Activated naive CD4-positive, alpha-beta T cell treated with anti-CD3 and anti-CD28 coated beads, Interleukin-2, amount 10 ng/mL, durations not matched to agents 7 days and 5 days (primary cell): ENCODE measurements at regions of chr3 and their contacts with region 1.

Region 1: DNA sequence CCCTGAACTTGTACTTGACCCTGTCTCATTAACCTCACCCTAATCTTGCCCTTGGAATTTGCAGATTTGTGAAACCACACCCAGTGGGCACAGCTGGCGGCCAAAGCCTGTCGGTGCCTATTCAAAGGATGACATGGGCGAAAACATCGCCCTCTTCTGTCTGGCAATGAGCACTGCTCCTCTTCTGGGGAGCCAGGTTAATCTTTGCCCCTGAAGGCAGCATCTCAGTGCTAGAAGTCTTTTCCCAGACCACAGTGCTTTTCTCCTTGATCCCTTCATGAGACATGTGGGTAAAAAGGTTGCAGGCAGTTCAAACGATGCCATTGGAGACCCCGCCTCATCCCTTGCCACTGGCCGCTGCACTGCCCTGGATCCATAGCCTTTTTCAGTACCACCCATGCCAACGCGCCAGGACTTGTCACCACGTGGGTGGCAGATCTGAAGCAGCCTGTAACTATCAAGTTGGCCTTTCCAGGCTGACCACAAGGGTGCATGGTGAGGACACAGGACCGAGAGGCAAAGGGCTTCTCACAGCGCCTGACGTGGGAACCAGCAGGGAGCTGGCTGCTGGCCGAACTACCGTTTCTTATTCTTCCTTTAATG is 6.5 kb upstream of the DNASE1L3 start:
- DNase-seq: peak; percentile 69
- H3K4me3 Mint-ChIP-seq: no peak overlapping the region
- H3K27ac Mint-ChIP-seq: no peak overlapping the region
- H3K4me1 Mint-ChIP-seq: peaks cover 8% of the 10 kb centered on the region
- H3K27me3 Mint-ChIP-seq: peaks cover 23% of the 10 kb centered on the region

Region 2: GRCh38 chr3:58188173-58188564 is 29.1 kb before region 1 on chr3:
- CTCF ChIA-PET with region 1: interaction called, 65 read pairs
- DNase-seq: no peak
- H3K4me3 Mint-ChIP-seq: no peak overlapping the region
- H3K27ac Mint-ChIP-seq: no peak overlapping the region
- H3K4me1 Mint-ChIP-seq: peaks cover 4% of the 10 kb centered on the region
- H3K27me3 Mint-ChIP-seq: peaks cover 9% of the 10 kb centered on the region

Region 3: DNA sequence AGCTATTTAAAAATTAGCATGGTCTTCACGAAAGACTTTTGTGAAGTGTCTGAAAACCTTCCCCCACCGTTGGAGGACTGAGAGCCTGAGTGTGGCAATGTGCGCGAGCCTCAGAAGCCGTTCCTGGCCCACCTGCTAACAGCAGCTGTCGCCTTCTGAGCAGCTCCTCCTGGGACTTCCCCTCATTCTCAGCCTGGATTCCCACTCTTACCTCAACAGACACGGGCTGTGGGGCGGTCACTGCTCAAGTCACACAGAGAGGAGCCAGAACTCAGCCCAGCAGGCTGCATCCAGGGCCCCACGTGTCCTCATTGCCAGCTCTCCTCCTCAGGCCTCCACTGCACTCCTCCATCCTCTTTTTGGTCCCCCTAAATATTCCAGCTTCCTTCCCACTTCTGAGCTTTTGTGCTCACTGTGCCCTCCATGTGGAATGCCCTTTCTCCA is 14.4 kb before region 1 on chr3:
- CTCF ChIA-PET with region 1: interaction called, 14 read pairs
- DNase-seq: no peak
- H3K4me3 Mint-ChIP-seq: no peak overlapping the region
- H3K27ac Mint-ChIP-seq: no peak overlapping the region
- H3K4me1 Mint-ChIP-seq: peaks cover 12% of the 10 kb centered on the region
- H3K27me3 Mint-ChIP-seq: peaks cover 51% of the 10 kb centered on the region